ENCODE measurements at regions of chr13 and their contacts with region 1.

Region 1: DNA sequence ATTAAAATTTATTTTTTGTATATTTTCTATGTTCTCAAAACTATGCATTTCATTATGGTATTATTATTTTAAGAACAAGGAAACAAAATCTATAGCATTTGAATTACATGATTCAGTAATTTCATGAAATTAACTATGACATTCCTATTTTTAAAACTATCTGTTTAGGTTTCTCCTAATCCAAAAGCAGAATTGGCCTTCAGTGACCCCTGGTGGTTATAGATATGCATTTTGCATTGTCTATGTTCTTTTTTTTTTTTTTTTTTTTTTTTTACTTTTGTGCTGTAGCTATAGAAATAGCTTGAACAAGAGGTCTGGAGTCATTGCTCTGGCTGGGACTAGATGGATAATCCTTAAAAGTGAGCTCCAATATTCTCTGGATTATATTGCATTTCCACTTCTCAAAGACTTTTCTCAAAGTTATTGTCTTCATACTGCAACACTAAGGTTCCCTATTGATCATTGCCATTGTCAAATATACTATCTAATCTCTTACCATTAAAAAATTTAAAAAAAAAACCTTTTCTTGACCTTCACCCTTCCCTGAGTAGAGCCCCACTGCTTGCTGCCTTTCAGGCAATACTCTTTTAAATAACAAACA is 15.9 kb upstream of the DNAJC3 start:
- DNase-seq: peak in 1 of 2 experiments; percentile 62
- H3K4me3 ChIP-seq: no peak overlapping the region
- H3K27ac ChIP-seq: no peak overlapping the region
- H3K4me1 ChIP-seq: peaks cover 14% of the 10 kb centered on the region
- H3K27me3 ChIP-seq: no peaks in the 10 kb centered on the region
- CTCF ChIP-seq: peak; percentile 86

Region 2: DNA sequence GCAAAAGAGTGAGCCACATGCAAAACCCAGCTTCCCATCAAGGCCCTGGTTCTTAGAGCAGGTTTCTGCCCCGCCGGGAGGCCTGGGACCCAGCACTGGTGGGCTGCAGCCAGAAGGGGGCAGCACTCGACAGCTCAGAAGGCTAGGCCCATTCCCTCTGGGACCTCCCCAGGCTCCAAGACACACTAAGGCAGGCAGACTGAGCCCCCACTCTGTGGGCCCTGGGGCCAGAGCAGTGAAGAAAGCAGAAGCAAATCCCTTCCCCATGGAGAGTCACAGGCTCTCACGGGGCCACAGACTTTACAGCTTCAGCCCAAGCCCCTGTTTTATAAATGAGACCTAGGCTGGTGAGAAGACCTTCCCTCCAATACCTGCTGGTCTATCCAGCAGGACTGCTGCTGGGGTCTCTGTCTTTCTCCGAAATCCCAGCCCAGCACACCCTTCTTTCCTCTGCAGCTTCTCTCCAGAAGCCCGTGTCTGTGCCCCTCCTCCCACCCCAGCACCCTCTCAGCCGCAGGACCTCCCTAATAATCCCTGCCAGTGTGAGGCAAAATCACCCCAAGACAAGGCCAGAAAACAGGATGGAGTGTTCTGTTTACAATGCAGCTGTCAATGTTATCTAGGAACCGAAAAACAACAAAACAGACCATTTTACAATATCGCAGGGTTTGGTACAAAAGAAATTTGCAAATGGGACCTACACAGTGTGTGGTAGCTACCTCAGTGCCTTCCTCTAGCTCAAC is 469.1 kb before region 1 on chr13:
- CTCF ChIA-PET with region 1: no interaction called
- POLR2A ChIA-PET with region 1: no interaction called
- intact Hi-C with region 1: loop called (anchors 2 kb)
- DNase-seq: peak; percentile 67 to 78
- H3K4me3 ChIP-seq: no peak overlapping the region
- H3K27ac ChIP-seq: no peak overlapping the region
- H3K4me1 ChIP-seq: no peaks in the 10 kb centered on the region
- H3K27me3 ChIP-seq: no peaks in the 10 kb centered on the region
- CTCF ChIP-seq: peak; percentile 96

Region 3: GRCh38 chr13:95403828-95404522 is 257.1 kb before region 1 on chr13:
- CTCF ChIA-PET with region 1: no interaction called
- POLR2A ChIA-PET with region 1: no interaction called
- intact Hi-C with region 1: loop called (anchors 10 kb)
- DNase-seq: peak; percentile 82 to 83
- H3K4me3 ChIP-seq: no peak overlapping the region
- H3K27ac ChIP-seq: no peak overlapping the region
- H3K4me1 ChIP-seq: peaks cover 8% of the 10 kb centered on the region
- H3K27me3 ChIP-seq: no peaks in the 10 kb centered on the region
- CTCF ChIP-seq: peak; percentile 98

Region 4: DNA sequence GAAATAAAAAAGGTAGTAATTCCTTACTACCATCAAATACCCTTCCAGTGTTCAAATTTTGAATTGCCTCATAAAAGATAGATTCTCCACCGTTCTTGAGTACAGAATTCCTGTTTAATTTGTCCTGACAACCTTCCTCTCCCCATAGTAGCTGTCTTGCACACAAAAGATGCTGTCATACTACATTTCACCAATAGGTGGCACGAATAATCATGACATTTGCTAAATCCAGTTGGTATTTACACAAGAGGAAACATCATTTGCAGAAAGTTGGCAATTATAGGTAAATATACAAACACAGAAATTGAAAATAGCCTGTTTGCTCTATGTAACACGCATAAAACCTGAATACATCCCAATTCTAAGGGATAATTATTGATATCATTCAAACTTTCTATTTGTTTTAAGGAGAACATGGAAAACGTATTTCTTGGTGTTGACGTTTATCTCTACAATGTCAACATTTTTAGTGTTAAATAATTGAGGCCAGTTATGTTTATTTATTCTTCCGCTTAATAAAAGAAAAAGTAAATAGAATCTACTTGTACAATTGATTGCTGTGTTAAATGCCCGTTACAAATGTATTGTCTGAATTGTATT is 166.9 kb before region 1 on chr13:
- CTCF ChIA-PET with region 1: interaction called, 3 read pairs
- POLR2A ChIA-PET with region 1: no interaction called
- intact Hi-C with region 1: loop called (anchors 10 kb)
- DNase-seq: peak in 1 of 2 experiments; percentile 63
- H3K4me3 ChIP-seq: no peak overlapping the region
- H3K27ac ChIP-seq: no peak overlapping the region
- H3K4me1 ChIP-seq: peaks cover 16% of the 10 kb centered on the region
- H3K27me3 ChIP-seq: no peaks in the 10 kb centered on the region
- CTCF ChIP-seq: peak; percentile 93

Region 5: DNA sequence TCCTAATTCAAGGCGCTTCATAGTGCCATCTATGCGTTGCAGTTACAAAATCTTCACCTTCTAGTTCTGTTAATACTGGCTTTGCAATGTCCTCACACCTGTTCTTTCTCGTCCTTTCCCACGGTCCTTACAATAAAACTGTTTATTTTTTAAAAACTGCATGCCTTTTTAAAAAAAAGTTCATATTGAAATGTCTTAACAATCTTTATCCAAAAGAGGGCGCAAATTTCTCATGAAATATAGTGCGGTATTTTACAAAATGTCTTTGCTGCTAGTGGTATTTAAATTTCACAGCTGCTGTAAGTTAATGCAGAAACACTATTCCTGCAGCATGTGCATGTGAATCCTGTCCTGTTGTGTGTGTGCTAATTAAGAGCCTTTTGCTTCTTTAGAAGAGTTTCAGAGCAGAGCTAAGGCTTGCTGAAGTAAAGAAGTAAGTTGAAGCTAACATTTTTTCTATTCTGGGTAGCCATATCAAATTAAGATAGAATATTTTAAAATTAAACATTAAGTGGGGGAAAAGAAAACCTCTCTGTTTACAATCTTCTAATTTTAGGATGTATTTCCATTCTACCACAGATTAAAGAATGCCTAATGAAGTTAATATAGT is 124.3 kb before region 1 on chr13:
- CTCF ChIA-PET with region 1: no interaction called
- POLR2A ChIA-PET with region 1: no interaction called
- intact Hi-C with region 1: loop called (anchors 5 kb)
- DNase-seq: peak in 1 of 2 experiments; percentile 46
- H3K4me3 ChIP-seq: no peak overlapping the region
- H3K27ac ChIP-seq: no peak overlapping the region
- H3K4me1 ChIP-seq: peaks cover 49% of the 10 kb centered on the region
- H3K27me3 ChIP-seq: no peaks in the 10 kb centered on the region
- CTCF ChIP-seq: peak; percentile 62

Region 6: DNA sequence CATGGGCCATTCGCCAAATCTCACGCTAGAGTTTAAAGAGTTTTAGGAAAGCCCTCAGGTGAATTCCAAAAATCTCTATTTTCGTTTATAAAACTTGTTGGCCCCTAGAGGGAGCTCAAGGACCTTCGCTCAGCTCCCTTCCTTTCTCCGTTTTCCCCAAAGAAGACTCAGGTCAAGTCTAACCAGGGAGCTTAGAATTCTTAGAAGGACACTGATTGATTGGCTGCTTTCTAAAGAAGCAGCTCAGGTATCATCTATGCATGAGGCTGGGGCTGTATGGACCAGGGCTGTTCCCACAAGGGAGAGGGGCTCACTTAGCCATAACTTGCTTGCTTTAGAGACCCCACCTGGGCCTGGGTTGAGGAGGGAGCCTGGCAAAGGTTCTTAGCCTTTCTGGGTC is 37.1 kb before region 1 on chr13:
- CTCF ChIA-PET with region 1: interaction called, 6 read pairs
- POLR2A ChIA-PET with region 1: no interaction called
- intact Hi-C with region 1: loop called (anchors 5 kb)
- DNase-seq: peak; percentile 15 to 57
- H3K4me3 ChIP-seq: no peak overlapping the region
- H3K27ac ChIP-seq: no peak overlapping the region
- H3K4me1 ChIP-seq: no peaks in the 10 kb centered on the region
- H3K27me3 ChIP-seq: no peaks in the 10 kb centered on the region
- CTCF ChIP-seq: peak; percentile 87

Region 7: DNA sequence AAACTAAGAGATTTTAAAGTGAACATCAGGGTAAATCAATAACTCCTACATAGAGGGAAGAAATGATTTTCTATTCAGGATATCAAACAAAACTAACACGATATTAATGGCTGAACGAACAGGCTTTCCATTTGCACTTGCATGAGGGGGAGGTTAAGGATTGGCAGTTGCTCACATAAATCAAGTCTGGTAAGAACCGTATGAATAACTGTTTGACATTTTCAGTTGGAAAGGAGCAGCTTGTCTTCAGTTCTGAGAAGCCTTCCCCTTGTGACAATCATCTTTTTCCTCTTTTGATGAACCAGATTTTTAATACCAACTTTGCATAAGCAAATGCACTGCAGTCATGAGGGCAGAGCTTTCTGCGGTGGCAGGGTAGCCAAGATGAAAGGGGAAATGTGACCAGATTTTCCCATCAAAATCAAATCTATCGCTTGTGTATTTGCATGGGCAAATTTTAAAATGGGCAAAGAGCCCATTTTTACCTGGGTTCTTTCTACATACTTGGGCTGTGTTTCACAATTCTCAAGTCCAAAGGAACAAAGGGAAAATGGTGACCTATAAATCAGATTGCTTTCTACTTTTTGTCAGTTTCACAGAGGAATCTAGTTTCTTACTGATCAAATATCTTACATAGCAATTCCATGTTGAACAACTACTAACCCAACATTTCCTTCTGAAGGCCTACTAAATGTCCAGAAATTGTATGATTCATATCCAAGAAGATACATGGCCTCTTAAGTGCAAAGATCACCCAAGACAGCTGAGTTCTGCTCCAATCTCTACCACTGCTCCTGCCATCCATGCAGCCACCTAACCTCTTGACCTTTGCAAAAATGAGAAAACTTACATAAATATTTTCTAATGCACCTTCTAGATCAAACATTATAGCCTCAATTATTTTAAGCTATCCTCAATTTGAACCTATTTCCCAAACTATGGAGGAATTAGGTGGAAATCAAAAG is 1083.6 kb after region 1 on chr13:
- CTCF ChIA-PET with region 1: interaction called, 30 read pairs
- POLR2A ChIA-PET with region 1: no interaction called
- intact Hi-C with region 1: no loop called
- DNase-seq: no peak
- H3K4me3 ChIP-seq: no peak overlapping the region
- H3K27ac ChIP-seq: no peak overlapping the region
- H3K4me1 ChIP-seq: no peaks in the 10 kb centered on the region
- H3K27me3 ChIP-seq: no peaks in the 10 kb centered on the region; the same call in 1 of the 2 replicates
- CTCF ChIP-seq: no peak

Measured in PC-9 (cell line).